ENCODE measurements at regions of chr17 and their contacts with region 1.

Region 1: DNA sequence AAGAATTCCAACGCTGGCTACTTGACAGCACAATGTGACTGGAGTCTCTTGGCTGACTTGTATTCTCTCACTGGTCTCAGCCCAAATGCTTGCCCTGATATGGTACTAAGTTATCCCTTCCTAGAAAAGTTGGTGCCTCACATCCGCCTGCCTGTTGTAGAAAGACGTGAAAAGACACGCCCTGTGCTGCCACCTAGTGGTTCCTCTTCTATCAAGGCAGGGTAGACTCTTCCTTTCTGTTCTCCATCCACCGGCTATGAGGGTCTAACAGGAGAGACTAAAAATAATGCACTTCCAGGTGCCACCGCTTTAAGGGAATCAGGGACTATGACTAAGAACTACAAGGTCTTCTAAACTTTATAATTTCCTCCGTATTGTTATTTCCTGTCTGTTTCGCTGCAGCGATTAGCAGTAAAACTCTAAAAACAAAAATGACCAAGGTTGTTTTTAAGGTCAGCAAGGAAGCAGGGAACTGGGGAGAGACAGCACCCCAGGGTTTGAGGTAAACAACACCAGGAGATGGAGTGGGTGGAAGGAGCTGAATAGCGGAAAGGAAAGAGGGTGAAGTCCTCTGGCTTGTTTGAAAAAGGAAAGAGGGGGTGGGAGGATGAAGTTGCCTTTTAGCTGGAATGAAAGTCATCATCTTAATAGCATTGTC is 109.5 kb downstream of the YPEL2 start:
- DNase-seq: peak; percentile 90
- ATAC-seq: peak; percentile 92

Region 2: GRCh38 chr17:59311130-59311920 is 129.6 kb before region 1 on chr17:
- intact Hi-C with region 1: loop called (anchors 1 kb)
- DNase-seq: no peak
- ATAC-seq: peak; percentile 92

Region 3: DNA sequence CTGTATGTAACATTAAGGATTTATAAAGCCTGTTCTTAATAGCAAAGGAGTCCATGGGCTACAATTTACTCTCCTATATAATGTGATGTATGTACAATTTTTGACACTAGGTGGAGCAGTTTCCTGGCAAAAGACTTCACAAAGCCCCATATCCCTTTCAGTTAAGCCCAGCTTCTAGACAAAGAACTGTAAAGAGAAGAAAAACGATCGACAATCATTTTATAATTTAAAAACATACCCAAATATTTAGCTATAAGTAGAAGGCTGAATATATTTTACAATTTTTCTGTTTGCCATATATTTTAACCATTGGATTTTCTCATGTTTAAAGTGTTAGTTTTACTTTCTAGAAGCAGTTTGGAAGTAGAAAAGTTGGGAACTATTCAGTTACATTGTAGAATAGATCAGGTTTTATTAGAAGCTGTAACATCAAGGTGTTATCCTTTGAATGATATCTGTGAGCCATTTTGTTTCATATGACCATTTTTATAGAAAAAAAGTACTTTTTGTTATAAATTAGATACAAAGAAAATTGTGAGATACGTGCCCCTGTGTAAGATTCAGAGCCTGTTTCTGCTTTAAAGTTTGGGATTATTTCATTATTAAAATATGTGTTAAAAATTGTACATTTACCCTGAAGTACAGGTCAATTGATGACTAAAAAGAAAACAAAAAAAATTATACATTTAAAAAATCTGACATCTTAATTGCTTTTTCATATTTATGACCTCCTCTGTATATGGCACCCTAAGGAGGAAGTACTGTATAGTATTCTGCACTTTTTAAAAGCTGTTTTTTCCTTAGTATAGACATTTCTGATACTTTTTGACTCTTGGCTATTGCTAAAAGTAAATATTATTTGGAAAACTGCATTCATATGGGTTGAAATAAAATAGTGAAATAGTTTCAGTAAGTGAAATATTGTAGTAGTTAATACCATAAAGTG is 312.9 kb after region 1 on chr17:
- intact Hi-C with region 1: no loop called
- DNase-seq: no peak
- ATAC-seq: peak; percentile 83

Measured in Right ventricle myocardium inferior (tissue), 1 donor.